ENCODE measurements at regions of chr13 and their contacts with region 1.

Region 1: GRCh38 chr13:62320129-62321108 is 904.8 kb upstream of the PCDH20 start:
- DNase-seq: peak; percentile 42
- H3K4me3 ChIP-seq: no peak overlapping the region
- H3K27ac ChIP-seq: no peak overlapping the region
- H3K27me3 ChIP-seq: no peaks in the 10 kb centered on the region
- CTCF ChIP-seq: peak; percentile 76

Region 2: GRCh38 chr13:62119739-62120700 is 200.4 kb before region 1 on chr13:
- CTCF ChIA-PET with region 1: interaction called, 15 read pairs
- POLR2A ChIA-PET with region 1: no interaction called
- DNase-seq: no peak
- H3K4me3 ChIP-seq: no peak overlapping the region
- H3K27ac ChIP-seq: no peak overlapping the region
- H3K27me3 ChIP-seq: no peaks in the 10 kb centered on the region
- CTCF ChIP-seq: peak; percentile 35

Region 3: GRCh38 chr13:62309904-62310303 is 10.5 kb before region 1 on chr13:
- CTCF ChIA-PET with region 1: interaction called, 19 read pairs
- POLR2A ChIA-PET with region 1: no interaction called
- DNase-seq: no peak
- H3K4me3 ChIP-seq: no peak overlapping the region
- H3K27ac ChIP-seq: no peak overlapping the region
- H3K27me3 ChIP-seq: no peaks in the 10 kb centered on the region
- CTCF ChIP-seq: no peak

Region 4: DNA sequence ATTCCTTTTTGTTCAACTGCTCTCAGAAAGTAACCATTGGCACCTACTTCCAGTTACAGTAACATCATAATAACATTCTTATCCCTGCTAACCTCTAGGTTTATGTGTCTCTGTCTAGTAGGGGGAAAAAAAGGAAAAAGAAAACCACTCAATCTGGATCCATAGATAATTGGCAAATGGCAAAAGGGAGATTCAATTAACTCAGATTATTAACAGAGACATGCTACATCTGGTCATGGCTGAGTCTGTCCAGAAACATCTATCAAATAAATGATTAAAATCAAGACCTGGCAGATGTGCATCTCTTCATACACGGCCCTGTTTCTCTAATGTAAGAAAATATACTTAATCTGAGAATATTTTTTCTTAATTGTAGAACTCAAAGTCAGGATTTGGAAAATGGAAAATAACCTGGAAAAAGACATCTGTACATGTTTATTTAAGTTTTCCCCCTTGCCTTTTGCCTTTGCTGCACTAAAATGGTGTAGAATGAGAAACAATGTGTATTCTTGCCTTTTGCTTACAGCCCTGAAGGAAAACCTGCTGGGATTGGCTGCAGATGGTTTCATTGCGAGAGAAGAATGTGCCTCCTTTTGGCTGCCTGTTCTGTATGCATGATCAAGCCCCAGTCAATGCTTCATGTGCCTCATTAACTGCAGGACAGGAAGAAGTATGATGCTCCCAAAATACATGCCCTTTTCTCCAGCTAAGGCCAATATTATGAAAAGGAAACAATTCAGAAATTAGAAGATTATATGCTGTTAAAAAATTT is 16.9 kb after region 1 on chr13:
- CTCF ChIA-PET with region 1: interaction called, 13 read pairs
- POLR2A ChIA-PET with region 1: no interaction called
- DNase-seq: no peak
- H3K4me3 ChIP-seq: no peak overlapping the region
- H3K27ac ChIP-seq: no peak overlapping the region
- H3K27me3 ChIP-seq: no peaks in the 10 kb centered on the region
- CTCF ChIP-seq: no peak

Region 5: GRCh38 chr13:62357887-62358645 is 37.6 kb after region 1 on chr13:
- CTCF ChIA-PET with region 1: interaction called, 53 read pairs
- POLR2A ChIA-PET with region 1: no interaction called
- DNase-seq: peak; percentile 48
- H3K4me3 ChIP-seq: no peak overlapping the region
- H3K27ac ChIP-seq: no peak overlapping the region
- H3K27me3 ChIP-seq: no peaks in the 10 kb centered on the region
- CTCF ChIP-seq: peak; percentile 82

Measured in AG04450 (cell line).